Lower leg skin (tissue), 4 donors: ENCODE measurements at regions of chr17 and their contacts with region 1.

Region 1: DNA sequence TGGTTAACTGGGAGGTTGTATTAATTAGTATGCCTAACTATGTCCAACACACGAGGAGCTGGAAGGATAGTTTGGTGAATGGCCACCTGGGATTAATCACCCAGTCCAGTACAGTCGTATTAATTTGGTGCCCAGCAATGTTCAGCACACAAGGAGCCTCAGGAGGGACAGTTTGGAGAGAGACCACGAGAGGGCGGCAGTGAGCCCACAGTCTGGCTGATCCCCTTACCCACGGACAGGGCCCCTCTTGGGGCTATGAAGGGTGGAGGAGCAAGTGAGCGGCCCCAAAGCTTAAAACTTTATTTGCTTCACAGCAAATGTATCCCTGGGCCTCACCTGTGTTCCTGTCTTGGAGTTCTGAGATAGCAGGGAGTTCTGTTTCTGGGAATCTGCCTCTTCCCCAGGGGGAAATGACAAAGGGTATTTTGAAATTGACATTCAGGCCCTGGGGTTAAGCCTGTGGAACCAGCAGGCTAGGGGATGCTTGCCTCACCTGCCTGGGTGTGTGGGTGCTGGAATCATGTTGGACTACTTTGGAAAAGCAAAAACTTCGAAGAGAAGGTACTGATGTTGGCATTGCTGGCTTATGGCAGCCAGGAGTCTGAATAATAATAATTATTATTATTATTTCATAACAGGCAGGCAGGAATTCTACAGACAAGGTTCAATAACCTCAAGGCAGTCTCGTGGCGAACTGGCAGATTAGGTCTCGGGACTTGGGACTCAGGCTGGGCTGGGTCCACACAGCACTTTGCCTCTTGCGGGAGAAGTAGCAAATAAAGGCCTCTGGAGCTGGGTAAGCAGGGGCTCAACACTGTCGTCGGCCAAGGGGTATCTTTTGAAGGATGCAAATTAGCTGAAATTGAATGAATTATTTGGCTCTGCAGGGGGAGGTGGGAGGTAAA is 227.6 kb upstream of the ASIC2 start:
- DNase-seq: no peak
- H3K4me3 ChIP-seq: no peak overlapping the region
- CTCF ChIP-seq: no peak
- POLR2A ChIP-seq: no peak

Region 2: GRCh38 chr17:33486135-33486885 is 34.4 kb before region 1 on chr17:
- intact Hi-C with region 1: no loop called
- DNase-seq: no peak
- H3K4me3 ChIP-seq: no peak overlapping the region
- CTCF ChIP-seq: no peak
- POLR2A ChIP-seq: no peak

Region 3: GRCh38 chr17:33667052-33667509 is 146.4 kb after region 1 on chr17:
- intact Hi-C with region 1: loop called (anchors 10 kb)
- DNase-seq: peak; percentile 59 to 84
- H3K4me3 ChIP-seq: no peak overlapping the region
- CTCF ChIP-seq: no peak
- POLR2A ChIP-seq: no peak